ENCODE measurements at regions of chr12 and their contacts with region 1.

Region 1: GRCh38 chr12:6493497-6494257 is at the start of gene NCAPD2:
- DNase-seq: peak; percentile 82 to 97 (median 96)
- ATAC-seq: peak; percentile 91
- H3K4me3 ChIP-seq: peak within 1 kb of the TSS; percentile 98
- H3K4me3 Mint-ChIP-seq: peak within 1 kb of the TSS; percentile 86 to 98 (median 96)
- H3K27ac ChIP-seq: peak within 1 kb of the TSS; percentile 83
- H3K27ac Mint-ChIP-seq: peak within 1 kb of the TSS; percentile 87 to 97 (median 96)
- H3K4me1 ChIP-seq: peaks cover 22 to 24% of the 10 kb centered on the region in 2 donors
- H3K4me1 Mint-ChIP-seq: peaks cover 18 to 44% (median 37%) of the 10 kb centered on the region in 7 donors
- H3K27me3 ChIP-seq: no peaks in the 10 kb centered on the region
- H3K27me3 Mint-ChIP-seq: no peaks in the 10 kb centered on the region
- total RNA-seq, gene NCAPD2: 30.3 to 121 (median 38.4) TPM

Region 2: GRCh38 chr12:6145564-6145963 is 348.1 kb before region 1 on chr12:
- CTCF ChIA-PET with region 1: no interaction called
- POLR2A ChIA-PET with region 1: no interaction called
- intact Hi-C with region 1: no loop called
- DNase-seq: peak in 1 of 9 donors; percentile 10
- ATAC-seq: no peak
- H3K4me3 ChIP-seq: no peak overlapping the region
- H3K4me3 Mint-ChIP-seq: peak overlapping the region in 9 of 10 donors; percentile 5 to 74 (median 55)
- H3K27ac ChIP-seq: no peak overlapping the region
- H3K27ac Mint-ChIP-seq: peak overlapping the region; percentile 28 to 90 (median 75)
- H3K4me1 ChIP-seq: peaks cover 3 to 43% of the 10 kb centered on the region in 2 donors
- H3K4me1 Mint-ChIP-seq: peaks cover 25 to 60% (median 39%) of the 10 kb centered on the region in 7 donors
- H3K27me3 ChIP-seq: peaks cover 0 to 3% of the 10 kb centered on the region in 2 donors
- H3K27me3 Mint-ChIP-seq: no peaks in the 10 kb centered on the region

Region 3: GRCh38 chr12:6341417-6342139 is 152.1 kb before region 1 on chr12 and contains the start of gene TNFRSF1A:
- CTCF ChIA-PET with region 1: interaction called, 3 read pairs
- POLR2A ChIA-PET with region 1: interaction called, 3 read pairs
- intact Hi-C with region 1: loop called in 1 of 2 experiments (anchors 2 kb)
- DNase-seq: peak in 7 of 9 donors; percentile 45 to 66 (median 54)
- ATAC-seq: peak; percentile 60
- H3K4me3 ChIP-seq: peak within 1 kb of the TSS; percentile 88
- H3K4me3 Mint-ChIP-seq: no peak within 1 kb of the TSS
- H3K27ac ChIP-seq: peak within 1 kb of the TSS; percentile 92
- H3K27ac Mint-ChIP-seq: peak within 1 kb of the TSS in 3 of 9 donors; percentile 95 to 97 (median 95)
- H3K4me1 ChIP-seq: peaks cover 54 to 56% of the 10 kb centered on the region in 2 donors
- H3K4me1 Mint-ChIP-seq: peaks cover 32 to 43% (median 39%) of the 10 kb centered on the region in 7 donors
- H3K27me3 ChIP-seq: no peaks in the 10 kb centered on the region
- H3K27me3 Mint-ChIP-seq: no peaks in the 10 kb centered on the region
- total RNA-seq, gene TNFRSF1A: 40.9 to 99.4 (median 67.3) TPM

Region 4: DNA sequence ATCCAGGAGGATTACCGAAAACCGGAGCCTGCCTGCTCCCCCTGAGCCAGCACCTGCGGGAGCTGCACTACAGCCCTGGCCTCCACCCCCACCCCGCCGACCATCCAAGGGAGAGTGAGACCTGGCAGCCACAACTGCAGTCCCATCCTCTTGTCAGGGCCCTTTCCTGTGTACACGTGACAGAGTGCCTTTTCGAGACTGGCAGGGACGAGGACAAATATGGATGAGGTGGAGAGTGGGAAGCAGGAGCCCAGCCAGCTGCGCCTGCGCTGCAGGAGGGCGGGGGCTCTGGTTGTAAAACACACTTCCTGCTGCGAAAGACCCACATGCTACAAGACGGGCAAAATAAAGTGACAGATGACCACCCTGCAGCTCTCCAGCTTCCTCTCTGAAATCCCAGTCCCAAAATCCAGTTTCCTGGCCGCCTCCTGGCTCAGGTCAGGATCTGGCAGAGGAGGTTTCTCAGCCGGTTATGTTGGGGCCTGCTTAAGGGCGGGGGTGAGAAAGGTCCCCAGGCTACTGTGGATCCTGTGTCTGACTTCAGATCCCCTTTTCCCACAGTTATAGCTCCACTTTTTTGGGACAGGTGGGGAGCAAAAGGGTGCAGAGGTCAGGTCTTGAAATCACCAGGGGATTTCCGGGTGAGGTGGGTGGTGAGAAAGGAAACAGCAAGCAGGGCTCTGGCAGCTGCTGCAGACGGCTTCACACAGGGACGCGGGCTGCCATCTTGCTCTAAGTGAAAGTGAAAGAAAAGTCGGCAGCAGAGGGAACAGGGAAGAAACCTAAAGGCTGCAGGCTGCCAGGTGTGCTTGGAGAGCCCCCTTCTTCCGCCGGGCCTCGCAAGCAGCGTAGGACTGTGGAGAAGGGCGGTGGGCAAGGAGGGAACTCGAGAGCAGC is 42.1 kb before region 1 on chr12 and contains the start of gene TAPBPL:
- CTCF ChIA-PET with region 1: no interaction called
- POLR2A ChIA-PET with region 1: interaction called, 13 read pairs
- intact Hi-C with region 1: loop called (anchors 1 kb)
- DNase-seq: peak; percentile 49 to 93 (median 87)
- ATAC-seq: peak; percentile 94
- H3K4me3 ChIP-seq: peak within 1 kb of the TSS; percentile 83
- H3K4me3 Mint-ChIP-seq: peak within 1 kb of the TSS; percentile 96 to 100 (median 98)
- H3K27ac ChIP-seq: peak within 1 kb of the TSS; percentile 96
- H3K27ac Mint-ChIP-seq: peak within 1 kb of the TSS; percentile 96 to 100 (median 99)
- H3K4me1 ChIP-seq: peaks cover 50% of the 10 kb centered on the region in 2 donors
- H3K4me1 Mint-ChIP-seq: peaks cover 50 to 84% (median 73%) of the 10 kb centered on the region in 7 donors
- H3K27me3 ChIP-seq: no peaks in the 10 kb centered on the region
- H3K27me3 Mint-ChIP-seq: no peaks in the 10 kb centered on the region
- total RNA-seq, gene TAPBPL: 23.0 to 65.4 (median 52.9) TPM

Region 5: DNA sequence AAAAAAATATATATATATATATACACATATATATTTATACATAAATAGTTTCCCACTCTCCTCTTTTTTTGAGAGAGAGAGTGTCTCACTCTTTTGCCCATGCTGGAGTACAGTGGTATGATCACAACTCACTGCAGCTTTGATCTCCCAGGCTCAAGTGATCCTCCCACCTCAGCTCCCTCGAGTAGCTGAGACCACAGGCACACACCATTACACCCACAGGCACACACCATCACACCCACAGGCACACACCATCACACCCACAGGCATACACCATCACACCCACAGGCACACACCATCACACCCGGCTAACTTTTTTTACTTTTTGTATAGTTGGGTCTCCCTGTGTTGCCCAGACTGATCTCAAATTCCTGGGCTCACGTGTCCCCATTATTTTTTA is 26.5 kb after region 1 on chr12:
- CTCF ChIA-PET with region 1: no interaction called
- POLR2A ChIA-PET with region 1: interaction called, 4 read pairs
- intact Hi-C with region 1: loop called in 1 of 2 experiments (anchors 1 kb)
- DNase-seq: no peak
- ATAC-seq: no peak
- H3K4me3 ChIP-seq: no peak overlapping the region
- H3K4me3 Mint-ChIP-seq: no peak overlapping the region
- H3K27ac ChIP-seq: no peak overlapping the region
- H3K27ac Mint-ChIP-seq: peak overlapping the region in 7 of 9 donors; percentile 9 to 78 (median 29)
- H3K4me1 ChIP-seq: no peaks in the 10 kb centered on the region
- H3K4me1 Mint-ChIP-seq: peaks cover 0 to 7% (median 0%) of the 10 kb centered on the region in 7 donors
- H3K27me3 ChIP-seq: no peaks in the 10 kb centered on the region
- H3K27me3 Mint-ChIP-seq: no peaks in the 10 kb centered on the region

Region 6: DNA sequence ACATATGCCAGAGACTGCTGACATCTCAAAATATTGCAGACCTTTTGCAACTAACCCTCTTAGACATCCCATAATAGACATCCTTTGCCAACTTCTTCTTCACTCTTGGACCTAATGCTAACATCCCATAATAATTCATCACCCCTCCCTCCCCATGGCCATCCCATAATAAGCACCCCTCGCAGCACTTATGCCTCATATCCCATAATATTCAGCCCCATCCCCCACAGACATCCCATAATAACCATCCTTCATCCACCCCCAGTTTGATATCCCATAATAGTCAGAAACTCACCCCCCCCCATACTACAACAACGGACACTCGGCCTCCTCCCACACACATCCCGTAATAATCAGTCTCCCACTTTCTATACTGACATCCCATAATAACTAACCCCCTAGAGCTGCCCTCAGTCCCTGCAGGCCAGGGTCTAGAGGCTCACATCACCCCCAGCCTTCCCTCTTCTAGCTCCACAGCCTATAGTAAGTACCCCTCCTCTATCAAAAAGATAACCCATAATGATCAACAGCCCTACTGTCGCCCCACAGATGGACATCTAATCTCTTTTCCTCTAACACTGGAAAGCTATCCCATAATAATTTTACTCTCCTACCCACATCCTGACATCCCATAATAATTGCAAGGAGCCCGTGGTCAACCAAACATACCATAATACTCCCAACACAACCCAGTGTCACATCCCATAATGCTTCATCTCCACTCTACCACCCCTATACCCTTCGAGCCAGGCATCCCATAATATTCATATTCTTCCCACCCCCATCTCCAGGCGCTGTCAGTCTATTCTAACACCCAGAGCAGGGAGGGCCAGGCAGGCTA is 114.3 kb after region 1 on chr12:
- CTCF ChIA-PET with region 1: no interaction called
- POLR2A ChIA-PET with region 1: no interaction called
- intact Hi-C with region 1: loop called (anchors 1 to 2 kb)
- DNase-seq: peak in 8 of 9 donors; percentile 56 to 81 (median 71)
- ATAC-seq: peak; percentile 49
- H3K4me3 ChIP-seq: no peak overlapping the region
- H3K4me3 Mint-ChIP-seq: no peak overlapping the region
- H3K27ac ChIP-seq: peak overlapping the region; percentile 96
- H3K27ac Mint-ChIP-seq: no peak overlapping the region
- H3K4me1 ChIP-seq: peaks cover 46 to 47% of the 10 kb centered on the region in 2 donors
- H3K4me1 Mint-ChIP-seq: peaks cover 48 to 55% (median 51%) of the 10 kb centered on the region in 7 donors
- H3K27me3 ChIP-seq: no peaks in the 10 kb centered on the region
- H3K27me3 Mint-ChIP-seq: no peaks in the 10 kb centered on the region

Region 7: GRCh38 chr12:6953442-6954315 is 460.0 kb after region 1 on chr12:
- CTCF ChIA-PET with region 1: no interaction called
- POLR2A ChIA-PET with region 1: no interaction called
- intact Hi-C with region 1: loop called in 1 of 2 experiments (anchors 5 kb)
- DNase-seq: peak in 8 of 9 donors; percentile 65 to 92 (median 74)
- ATAC-seq: peak; percentile 56
- H3K4me3 ChIP-seq: peak overlapping the region; percentile 92
- H3K4me3 Mint-ChIP-seq: peak overlapping the region; percentile 93 to 100 (median 98)
- H3K27ac ChIP-seq: peak overlapping the region; percentile 95
- H3K27ac Mint-ChIP-seq: peak overlapping the region; percentile 83 to 100 (median 97)
- H3K4me1 ChIP-seq: peaks cover 70 to 84% of the 10 kb centered on the region in 2 donors
- H3K4me1 Mint-ChIP-seq: peaks cover 54 to 85% (median 72%) of the 10 kb centered on the region in 7 donors
- H3K27me3 ChIP-seq: no peaks in the 10 kb centered on the region
- H3K27me3 Mint-ChIP-seq: no peaks in the 10 kb centered on the region

Measured in naive thymus-derived CD4-positive, alpha-beta T cell (primary cell).